ENCODE measurements at regions of chr7 and their contacts with region 1.

Region 1: DNA sequence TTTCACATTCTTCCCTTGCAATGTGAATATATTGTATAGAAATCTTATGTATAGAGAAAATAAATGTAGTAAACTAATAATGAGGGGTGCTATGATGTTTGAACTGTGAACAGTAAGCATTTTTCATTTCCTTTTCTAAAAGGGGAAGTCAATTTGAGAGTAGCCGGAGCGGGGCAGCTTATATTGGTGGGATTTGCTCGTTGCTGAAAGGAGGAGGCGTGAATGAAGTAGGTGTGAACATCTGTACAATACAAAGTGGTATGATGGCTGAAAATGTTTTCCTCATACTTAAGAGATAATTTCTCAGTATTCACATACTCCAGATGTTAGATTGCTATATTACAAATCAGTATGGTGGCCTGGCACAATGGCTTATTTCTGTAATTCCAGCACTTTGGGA is 87.1 kb downstream of the SRI start:
- DNase-seq: no peak
- H3K27ac ChIP-seq: no peak overlapping the region
- CTCF ChIP-seq: no peak

Region 2: DNA sequence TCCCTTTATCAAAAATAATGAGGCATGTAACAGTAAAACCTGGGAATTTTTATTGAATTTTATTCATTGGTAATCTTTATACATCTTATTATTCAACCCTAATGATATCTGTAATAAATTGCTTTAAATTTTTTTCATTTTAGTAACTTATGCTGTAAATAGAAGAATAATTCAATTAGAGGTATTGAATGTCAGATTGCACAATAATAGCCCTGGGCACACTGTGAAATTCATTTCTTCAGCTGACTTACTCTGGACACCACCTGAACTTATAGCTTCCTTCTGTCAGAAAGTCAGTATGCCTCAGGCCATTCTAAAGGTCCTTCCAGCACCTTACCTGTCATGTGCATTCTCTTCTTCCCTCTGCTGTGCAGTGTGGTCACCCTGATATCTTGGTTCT is 139.5 kb before region 1 on chr7:
- CTCF ChIA-PET with region 1: interaction called, 11 read pairs
- POLR2A ChIA-PET with region 1: no interaction called
- DNase-seq: no peak
- H3K27ac ChIP-seq: no peak overlapping the region
- CTCF ChIP-seq: no peak

Region 3: GRCh38 chr7:88042157-88042556 is 90.6 kb before region 1 on chr7:
- CTCF ChIA-PET with region 1: no interaction called
- POLR2A ChIA-PET with region 1: no interaction called
- DNase-seq: no peak
- H3K27ac ChIP-seq: no peak overlapping the region
- CTCF ChIP-seq: no peak